ENCODE measurements at regions of chr16 and their contacts with region 1.

Region 1: GRCh38 chr16:84607694-84608093 is 10.2 kb downstream of the COTL1 start:
- DNase-seq: peak; percentile 56
- ATAC-seq: peak; percentile 52
- H3K4me3 Mint-ChIP-seq: peak overlapping the region; percentile 70
- H3K27ac Mint-ChIP-seq: peak overlapping the region; percentile 92
- H3K4me1 Mint-ChIP-seq: peaks cover 94% of the 10 kb centered on the region
- H3K27me3 Mint-ChIP-seq: no peaks in the 10 kb centered on the region

Region 2: DNA sequence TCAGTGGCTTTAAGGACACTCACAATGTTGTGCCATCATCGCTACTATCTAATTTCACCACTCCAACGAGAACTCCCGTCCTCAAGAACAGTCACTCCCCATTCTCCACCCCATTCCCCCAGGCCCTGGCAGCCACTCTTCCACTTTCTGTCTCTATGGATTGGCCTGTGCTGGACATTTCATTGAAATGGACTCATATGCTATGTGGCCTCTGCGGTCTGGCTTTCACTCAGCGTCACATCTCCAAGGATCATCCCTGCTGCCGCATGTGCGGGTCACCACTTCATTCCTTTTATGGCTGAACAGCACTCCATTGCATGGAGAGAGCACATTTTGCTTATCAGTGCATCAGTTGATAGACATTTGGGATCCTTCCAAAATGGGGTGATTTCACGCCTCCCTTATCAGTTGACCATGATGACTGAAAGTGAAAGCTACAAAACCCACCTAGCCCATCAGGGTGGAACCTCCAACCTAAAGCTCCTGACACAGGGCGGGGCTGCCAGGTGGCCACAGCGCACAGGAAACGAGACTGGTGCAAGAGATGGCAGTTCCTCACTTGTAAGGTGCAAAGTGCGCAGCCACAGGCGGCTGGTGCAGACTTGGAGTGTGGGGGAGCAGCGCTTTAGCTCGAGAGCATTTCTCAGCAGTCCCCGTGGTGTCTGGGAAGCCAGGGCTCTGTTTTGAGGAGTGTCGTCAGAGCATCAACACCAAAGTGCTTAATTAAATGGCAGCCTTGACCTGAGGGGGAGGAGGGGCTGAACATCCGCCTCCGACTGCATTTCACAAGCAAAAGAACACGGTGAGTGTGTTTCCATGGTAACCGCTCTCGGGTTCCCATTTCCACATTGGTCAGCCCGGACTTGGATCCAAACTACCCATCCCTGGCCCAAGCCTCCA is 13.6 kb before region 1 on chr16:
- CTCF ChIA-PET with region 1: interaction called, 25 read pairs
- POLR2A ChIA-PET with region 1: interaction called, 30 read pairs
- DNase-seq: peak; percentile 95
- ATAC-seq: peak; percentile 87
- H3K4me3 Mint-ChIP-seq: peak overlapping the region; percentile 79
- H3K27ac Mint-ChIP-seq: peak overlapping the region; percentile 89
- H3K4me1 Mint-ChIP-seq: peaks cover 84% of the 10 kb centered on the region
- H3K27me3 Mint-ChIP-seq: no peaks in the 10 kb centered on the region

Region 3: DNA sequence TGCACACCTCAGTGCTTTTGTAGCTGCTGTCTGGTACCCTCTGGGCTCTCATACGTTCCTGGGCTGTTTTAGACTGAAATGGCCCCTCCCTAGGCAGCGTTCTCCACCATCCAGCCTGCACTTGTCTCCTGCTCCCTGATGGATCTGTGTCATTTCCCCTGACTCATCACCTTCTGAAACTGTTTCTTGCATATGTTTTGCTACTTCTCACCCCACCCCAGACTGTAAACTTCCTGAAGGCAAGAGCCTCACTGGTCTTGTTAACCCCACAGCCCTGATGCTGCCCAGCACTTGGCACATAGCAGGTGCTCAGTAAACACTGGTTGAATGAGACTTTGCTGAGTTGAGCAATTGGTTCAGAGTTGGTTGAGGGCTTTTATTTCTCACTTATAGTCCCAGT is 290.8 kb after region 1 on chr16:
- CTCF ChIA-PET with region 1: no interaction called
- POLR2A ChIA-PET with region 1: no interaction called
- DNase-seq: no peak
- ATAC-seq: no peak
- H3K4me3 Mint-ChIP-seq: no peak overlapping the region
- H3K27ac Mint-ChIP-seq: no peak overlapping the region
- H3K4me1 Mint-ChIP-seq: peaks cover 6% of the 10 kb centered on the region
- H3K27me3 Mint-ChIP-seq: peaks cover 8% of the 10 kb centered on the region

Measured in activated CD8-positive, alpha-beta T cell treated with anti-CD3 and anti-CD28 coated beads, Interleukin-2, amount 10 ng/mL, durations not matched to agents 7 days and 5 days (primary cell).